ENCODE measurements at regions of chr1 and their contacts with region 1.

Region 1: DNA sequence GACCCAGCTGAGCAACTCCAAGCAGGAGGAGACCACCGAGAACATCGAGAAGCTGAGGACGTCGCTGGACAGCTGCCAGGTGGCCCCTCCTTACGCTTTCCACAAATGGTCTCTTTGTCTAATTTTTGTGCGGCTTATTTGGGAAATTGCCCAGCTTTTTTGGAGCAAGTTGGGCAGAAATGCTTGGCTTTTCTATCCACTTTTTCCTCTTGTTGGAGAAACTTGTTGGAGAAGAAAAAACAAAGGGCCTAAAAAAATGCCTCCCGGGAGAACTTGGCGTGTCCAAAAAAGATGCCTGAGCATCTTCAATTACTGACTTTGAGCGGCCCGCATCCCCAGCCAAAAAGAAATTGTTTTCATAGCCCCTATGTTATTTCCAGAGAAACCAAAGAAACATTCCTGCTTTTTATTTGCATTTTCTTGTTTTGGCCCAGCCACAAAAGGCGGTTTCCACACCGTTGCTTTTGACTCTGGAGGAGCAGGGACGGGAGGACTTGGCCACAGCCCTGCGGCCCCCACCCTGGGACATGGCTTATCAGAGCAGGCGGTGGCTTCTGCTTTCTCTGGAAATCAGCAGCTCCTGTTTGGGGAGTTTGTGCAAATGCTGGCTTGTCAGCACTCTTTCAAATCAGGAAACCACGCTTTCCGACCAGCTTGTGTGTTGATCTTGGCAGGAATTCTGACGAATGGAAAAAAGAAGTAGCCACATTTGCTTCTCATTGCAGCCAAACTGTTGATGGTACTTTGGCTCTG is 81.2 kb upstream of the EFHD2 start:
- DNase-seq: peak; percentile 60 to 73
- H3K4me3 ChIP-seq: peak overlapping the region in 1 of 2 donors; percentile 10
- H3K27ac ChIP-seq: no peak overlapping the region
- H3K4me1 ChIP-seq: peaks cover 0 to 30% (median 17%) of the 10 kb centered on the region in 4 donors
- H3K27me3 ChIP-seq: peaks cover 0 to 28% of the 10 kb centered on the region in 2 donors
- CTCF ChIP-seq: no peak

Region 2: GRCh38 chr1:15409388-15410222 is 81.1 kb after region 1 on chr1 and contains the start of gene EFHD2:
- intact Hi-C with region 1: loop called (anchors 5 kb)
- DNase-seq: peak; percentile 89
- H3K4me3 ChIP-seq: peak within 1 kb of the TSS; percentile 73 to 76
- H3K27ac ChIP-seq: peak within 1 kb of the TSS; percentile 71 to 79
- H3K4me1 ChIP-seq: peaks cover 0 to 51% (median 41%) of the 10 kb centered on the region in 4 donors
- H3K27me3 ChIP-seq: no peaks in the 10 kb centered on the region
- CTCF ChIP-seq: no peak

Region 3: GRCh38 chr1:15429701-15430149 is 101.2 kb after region 1 on chr1:
- intact Hi-C with region 1: loop called (anchors 2 kb)
- DNase-seq: no peak
- H3K4me3 ChIP-seq: no peak overlapping the region
- H3K27ac ChIP-seq: no peak overlapping the region
- H3K4me1 ChIP-seq: no peaks in the 10 kb centered on the region
- H3K27me3 ChIP-seq: no peaks in the 10 kb centered on the region
- CTCF ChIP-seq: no peak

Measured in tibial artery (tissue), 4 donors.